Right ventricle myocardium superior (tissue), 1 donor: ENCODE measurements at regions of chr12 and their contacts with region 1.

Region 1: DNA sequence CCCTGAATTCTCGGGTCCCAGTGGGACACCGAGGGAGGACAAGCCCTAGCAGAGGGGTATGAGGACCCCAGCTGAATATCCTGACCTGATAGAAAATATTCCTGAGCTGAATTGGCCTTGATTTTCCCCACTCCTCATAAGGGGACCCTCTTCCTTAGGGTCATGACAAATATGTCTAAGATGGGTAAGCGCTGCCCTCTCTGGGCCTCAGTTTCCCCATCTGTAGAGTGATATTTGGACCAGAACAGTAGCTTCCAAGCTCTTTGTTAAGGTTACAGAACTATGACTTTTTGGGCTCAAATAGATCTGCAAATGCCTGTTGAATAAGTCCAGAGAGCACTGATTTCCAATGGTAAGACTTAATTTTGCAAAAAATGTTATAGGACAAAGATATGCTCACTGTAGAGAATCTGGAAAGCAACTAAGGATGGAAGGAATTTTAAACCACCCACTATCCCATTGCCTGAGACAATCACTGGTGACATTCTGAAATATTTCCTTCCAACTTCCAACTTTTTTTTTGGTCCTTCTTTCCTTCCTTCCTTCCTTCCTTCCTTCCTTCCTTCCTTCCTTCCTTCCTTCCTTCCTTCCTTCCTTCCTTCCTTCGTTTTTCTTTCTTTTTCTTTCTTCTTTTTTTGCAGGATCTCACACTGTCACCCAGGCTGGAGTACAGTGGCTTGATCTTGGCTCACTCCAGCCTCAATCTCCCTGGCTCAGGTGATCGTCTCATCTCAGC is 32.0 kb downstream of the MYL2 start:
- DNase-seq: no peak
- ATAC-seq: no peak

Region 2: DNA sequence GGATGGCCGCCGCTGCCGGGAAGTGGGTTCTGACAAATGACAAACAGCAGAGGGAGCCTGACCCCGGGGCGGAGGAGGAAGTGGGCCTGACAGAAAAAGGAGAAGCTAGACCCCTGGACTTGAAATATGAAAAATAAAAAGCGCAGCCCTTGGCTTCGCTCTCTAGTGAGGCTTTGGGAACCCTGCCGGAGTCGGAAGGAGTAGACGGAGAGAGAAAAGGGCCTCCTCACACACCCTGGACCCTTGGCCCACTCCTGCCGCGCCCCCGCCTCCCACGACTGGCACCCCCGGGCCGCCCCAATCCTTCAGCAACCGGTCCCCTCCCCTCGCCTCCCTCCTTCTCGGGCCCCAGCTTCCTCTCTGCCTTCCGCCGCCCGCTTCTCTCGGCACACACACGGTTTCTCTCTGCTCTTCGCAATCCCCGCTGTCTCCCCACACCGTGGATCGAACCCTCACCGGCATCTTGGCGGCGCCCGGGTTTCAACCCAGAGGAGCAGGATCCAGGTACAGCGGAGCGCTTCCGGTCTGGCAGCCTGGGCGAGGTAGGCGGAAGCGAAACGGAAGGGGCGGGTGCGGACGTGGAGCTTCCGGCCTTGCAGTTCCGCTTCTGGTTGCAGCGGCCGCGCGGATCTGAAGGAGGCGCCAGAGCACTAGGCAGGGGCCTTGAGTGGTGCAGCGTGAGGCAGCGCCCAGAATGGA is 438.5 kb before region 1 on chr12 and contains the start of gene ARPC3:
- intact Hi-C with region 1: loop called (anchors 10 kb)
- DNase-seq: peak; percentile 98
- ATAC-seq: peak; percentile 100
- total RNA-seq, gene ARPC3: 90.1 TPM

Region 3: DNA sequence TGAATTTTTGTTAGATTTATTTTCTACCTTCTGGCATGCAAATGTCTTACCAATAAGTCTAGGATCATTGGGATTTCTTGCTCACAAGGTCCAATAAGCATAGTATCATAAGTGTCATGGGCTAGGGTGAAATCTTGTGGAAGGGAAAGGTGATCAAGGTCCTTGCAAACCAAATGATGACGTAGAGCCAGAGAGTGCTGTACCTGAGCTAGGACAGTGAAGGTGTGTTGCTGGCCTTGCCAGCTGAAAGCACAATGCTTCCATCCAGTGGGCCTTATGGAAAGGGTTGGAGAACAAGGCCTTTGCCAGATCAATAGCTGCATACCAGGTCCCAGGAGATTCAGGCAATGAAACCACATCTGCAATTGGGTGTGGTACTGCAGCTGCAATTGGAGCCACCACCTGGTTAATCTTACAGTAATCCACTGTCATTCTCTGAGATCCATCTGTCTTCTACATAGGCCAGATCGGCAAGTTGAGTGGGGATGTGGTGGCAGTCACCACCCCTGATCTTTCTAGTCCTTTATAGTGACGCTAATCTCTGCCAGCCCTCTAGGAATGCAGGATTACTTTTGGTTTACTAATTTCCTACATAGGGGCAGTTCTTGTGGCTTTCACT is 240.8 kb after region 1 on chr12:
- intact Hi-C with region 1: no loop called
- DNase-seq: no peak
- ATAC-seq: no peak